Endothelial cell of umbilical vein (primary cell): ENCODE measurements at regions of chr3 and their contacts with region 1.

Region 1: DNA sequence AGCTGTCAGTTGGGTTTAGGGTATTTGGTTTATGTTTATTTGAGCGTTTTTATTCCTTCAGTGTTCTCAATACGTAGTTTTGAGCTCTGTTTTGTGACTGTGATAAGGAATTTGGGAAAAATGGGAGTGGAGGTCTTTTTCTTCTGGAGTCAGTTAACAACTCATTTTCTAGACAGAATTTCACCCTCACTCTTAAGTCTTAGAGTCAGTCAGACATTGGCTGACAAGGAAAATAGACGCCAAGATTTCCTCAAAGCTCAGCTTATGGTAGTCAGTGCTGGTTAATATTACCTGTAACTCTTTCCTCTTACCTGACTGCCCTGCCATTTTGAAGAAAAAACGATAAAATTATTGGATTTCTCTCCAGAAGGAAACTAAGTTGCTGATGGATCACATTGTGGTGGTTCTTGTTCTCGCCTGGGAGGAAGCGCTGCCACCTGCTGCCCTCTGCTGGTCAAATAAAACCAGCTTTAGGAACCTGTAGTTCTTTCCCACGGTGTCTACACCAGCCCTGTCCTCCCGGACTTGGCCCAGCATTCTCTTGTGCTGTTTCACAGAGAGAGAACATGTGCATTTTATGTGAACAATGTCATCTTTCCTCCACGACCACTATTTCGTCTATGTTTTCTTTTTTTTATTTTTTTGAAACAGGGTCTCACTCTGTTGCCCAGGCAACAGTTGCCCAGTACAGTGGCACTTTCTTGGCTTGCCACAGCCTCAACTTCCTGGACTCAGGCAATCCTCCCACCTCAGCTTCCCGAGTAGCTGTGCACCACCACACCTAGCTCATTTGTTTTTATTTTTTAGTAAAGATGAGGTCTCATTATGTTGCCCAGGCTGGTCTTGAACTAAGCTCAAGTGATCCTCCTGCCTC is 41.4 kb upstream of the UMPS start:
- DNase-seq: peak; percentile 82
- H3K4me3 ChIP-seq: no peak overlapping the region
- H3K27ac ChIP-seq: no peak overlapping the region
- H3K4me1 ChIP-seq: no peaks in the 10 kb centered on the region
- H3K27me3 ChIP-seq: peaks cover 7 to 13% of the 10 kb centered on the region in 2 experiments
- CTCF ChIP-seq: peak; percentile 80 to 81
- POLR2A ChIP-seq: no peak

Region 2: DNA sequence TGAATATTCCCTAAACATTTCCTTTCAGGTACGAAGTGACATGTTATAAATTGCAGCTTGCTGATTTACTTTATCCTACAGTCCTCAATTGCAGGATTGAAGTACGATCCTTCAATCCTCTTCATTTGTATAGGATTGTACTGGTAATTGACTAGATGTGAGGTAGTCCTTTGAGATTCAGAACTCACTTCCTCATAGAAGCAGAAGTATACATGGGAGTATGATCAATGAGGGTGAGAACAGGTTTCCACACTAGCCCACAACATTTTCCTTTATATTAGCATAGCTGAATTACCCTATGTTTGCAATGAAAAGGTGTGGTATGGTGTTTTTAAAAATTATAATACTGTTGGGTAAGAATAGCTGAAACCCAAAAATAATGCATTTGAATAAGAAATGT is 118.6 kb before region 1 on chr3:
- CTCF ChIA-PET with region 1: interaction called, 301 read pairs
- POLR2A ChIA-PET with region 1: no interaction called
- dilution Hi-C with region 1: no loop called
- intact Hi-C with region 1: loop called (anchors 1 kb)
- DNase-seq: no peak
- H3K4me3 ChIP-seq: no peak overlapping the region
- H3K27ac ChIP-seq: no peak overlapping the region
- H3K4me1 ChIP-seq: no peaks in the 10 kb centered on the region
- H3K27me3 ChIP-seq: peaks cover 6 to 9% of the 10 kb centered on the region in 2 experiments
- CTCF ChIP-seq: no peak
- POLR2A ChIP-seq: no peak

Region 3: DNA sequence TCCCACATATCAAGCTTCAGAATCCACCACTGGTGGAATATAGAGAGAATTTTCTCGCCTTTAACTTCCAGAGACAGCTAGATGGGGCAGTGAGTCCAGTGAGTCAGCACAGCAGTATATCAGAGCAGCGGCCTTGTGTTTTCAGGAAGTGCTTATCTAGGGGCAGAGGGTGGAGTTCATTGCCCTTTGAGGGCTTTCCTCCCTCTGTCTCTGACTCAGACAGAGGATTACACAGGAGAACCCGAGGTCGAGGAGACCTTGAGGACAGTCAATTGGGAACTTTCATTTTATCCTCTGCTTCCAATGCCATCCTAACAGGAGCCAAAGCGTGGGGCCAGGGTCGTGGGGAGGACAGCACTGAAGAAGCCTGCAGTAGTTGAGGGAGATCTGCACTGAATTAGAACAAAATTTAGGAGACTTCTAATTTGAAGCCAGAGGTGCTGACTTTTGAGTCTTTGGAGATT is 68.2 kb before region 1 on chr3:
- CTCF ChIA-PET with region 1: interaction called, 12 read pairs
- POLR2A ChIA-PET with region 1: no interaction called
- dilution Hi-C with region 1: no loop called
- intact Hi-C with region 1: no loop called
- DNase-seq: peak; percentile 67
- H3K4me3 ChIP-seq: no peak overlapping the region
- H3K27ac ChIP-seq: peak overlapping the region; percentile 1
- H3K4me1 ChIP-seq: peaks cover 20% of the 10 kb centered on the region
- H3K27me3 ChIP-seq: no peaks in the 10 kb centered on the region
- CTCF ChIP-seq: no peak
- POLR2A ChIP-seq: no peak

Region 4: GRCh38 chr3:124700880-124701684 is 12.3 kb after region 1 on chr3:
- CTCF ChIA-PET with region 1: interaction called, 14 read pairs
- POLR2A ChIA-PET with region 1: no interaction called
- dilution Hi-C with region 1: no loop called
- intact Hi-C with region 1: no loop called
- DNase-seq: no peak
- H3K4me3 ChIP-seq: no peak overlapping the region
- H3K27ac ChIP-seq: no peak overlapping the region
- H3K4me1 ChIP-seq: no peaks in the 10 kb centered on the region
- H3K27me3 ChIP-seq: no peaks in the 10 kb centered on the region
- CTCF ChIP-seq: no peak
- POLR2A ChIP-seq: no peak